Activated CD8-positive, alpha-beta T cell treated with anti-CD3 and anti-CD28 coated beads for 36 hours (primary cell): ENCODE measurements at regions of chr17 and their contacts with region 1.

Region 1: GRCh38 chr17:10327640-10328039 is 45.2 kb downstream of the MYH13 start:
- DNase-seq: peak; percentile 92
- ATAC-seq: peak; percentile 80
- H3K4me3 Mint-ChIP-seq: no peak overlapping the region
- H3K27ac Mint-ChIP-seq: no peak overlapping the region
- H3K4me1 Mint-ChIP-seq: no peaks in the 10 kb centered on the region
- H3K27me3 Mint-ChIP-seq: peaks cover 4% of the 10 kb centered on the region
- CTCF ChIP-seq: peak; percentile 95

Region 2: GRCh38 chr17:10295728-10296343 is 31.8 kb before region 1 on chr17:
- CTCF ChIA-PET with region 1: interaction called, 11 read pairs
- POLR2A ChIA-PET with region 1: no interaction called
- intact Hi-C with region 1: no loop called
- DNase-seq: peak; percentile 55
- ATAC-seq: no peak
- H3K4me3 Mint-ChIP-seq: no peak overlapping the region
- H3K27ac Mint-ChIP-seq: no peak overlapping the region
- H3K4me1 Mint-ChIP-seq: peaks cover 7% of the 10 kb centered on the region
- H3K27me3 Mint-ChIP-seq: peaks cover 5% of the 10 kb centered on the region
- CTCF ChIP-seq: peak; percentile 68

Region 3: DNA sequence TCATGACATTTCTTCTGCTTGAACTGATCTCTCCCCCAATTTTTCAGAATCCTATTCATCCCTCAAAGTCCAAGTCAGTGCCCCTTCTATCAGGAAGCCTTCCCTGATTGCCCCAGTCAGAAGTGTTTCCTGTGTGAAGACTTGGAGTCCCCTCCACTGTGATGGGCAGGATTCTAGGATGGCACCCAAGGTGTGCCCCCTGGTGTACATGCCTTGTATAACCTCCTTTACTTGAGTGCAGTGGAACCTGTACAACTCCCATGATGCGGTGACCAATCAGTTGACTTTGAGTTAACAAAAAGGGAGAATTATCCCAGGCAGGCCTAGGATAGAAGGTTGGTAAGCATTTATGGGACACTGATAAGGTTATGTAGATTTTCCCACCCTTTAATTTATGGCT is 21.8 kb after region 1 on chr17:
- CTCF ChIA-PET with region 1: interaction called, 12 read pairs
- POLR2A ChIA-PET with region 1: no interaction called
- intact Hi-C with region 1: no loop called
- DNase-seq: peak; percentile 27
- ATAC-seq: no peak
- H3K4me3 Mint-ChIP-seq: no peak overlapping the region
- H3K27ac Mint-ChIP-seq: no peak overlapping the region
- H3K4me1 Mint-ChIP-seq: no peaks in the 10 kb centered on the region
- H3K27me3 Mint-ChIP-seq: peaks cover 3% of the 10 kb centered on the region
- CTCF ChIP-seq: peak; percentile 18

Region 4: DNA sequence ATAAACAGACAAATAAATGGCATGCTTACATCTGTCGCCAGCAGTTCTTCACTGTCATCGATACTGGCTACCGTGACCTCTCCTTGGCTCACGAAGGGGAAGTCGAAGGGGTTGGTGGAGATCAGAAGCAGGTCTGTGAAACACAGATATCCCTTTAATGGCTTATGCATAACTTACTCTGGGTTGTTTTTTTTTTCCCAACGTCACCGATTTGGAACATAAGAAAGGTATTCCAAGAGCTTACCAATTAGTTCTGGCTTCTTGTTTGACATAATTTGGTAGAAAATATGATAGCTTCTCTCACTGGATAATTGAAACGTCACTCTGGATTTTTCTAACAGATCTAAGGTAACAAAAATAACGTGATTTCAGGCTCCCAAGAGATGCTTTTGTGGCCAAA is 27.0 kb after region 1 on chr17:
- CTCF ChIA-PET with region 1: interaction called, 10 read pairs
- POLR2A ChIA-PET with region 1: no interaction called
- intact Hi-C with region 1: no loop called
- DNase-seq: no peak
- ATAC-seq: no peak
- H3K4me3 Mint-ChIP-seq: no peak overlapping the region
- H3K27ac Mint-ChIP-seq: no peak overlapping the region
- H3K4me1 Mint-ChIP-seq: no peaks in the 10 kb centered on the region
- H3K27me3 Mint-ChIP-seq: peaks cover 1% of the 10 kb centered on the region
- CTCF ChIP-seq: no peak